ENCODE measurements at regions of chr2 and their contacts with region 1.

Region 1: GRCh38 chr2:217510771-217511291 is 492.0 kb downstream of the TNS1 start:
- DNase-seq: peak; percentile 91

Region 2: GRCh38 chr2:216698895-216699294 is 811.9 kb before region 1 on chr2:
- in situ Hi-C with region 1: loop called (anchors 25 kb)
- DNase-seq: peak; percentile 89

Region 3: DNA sequence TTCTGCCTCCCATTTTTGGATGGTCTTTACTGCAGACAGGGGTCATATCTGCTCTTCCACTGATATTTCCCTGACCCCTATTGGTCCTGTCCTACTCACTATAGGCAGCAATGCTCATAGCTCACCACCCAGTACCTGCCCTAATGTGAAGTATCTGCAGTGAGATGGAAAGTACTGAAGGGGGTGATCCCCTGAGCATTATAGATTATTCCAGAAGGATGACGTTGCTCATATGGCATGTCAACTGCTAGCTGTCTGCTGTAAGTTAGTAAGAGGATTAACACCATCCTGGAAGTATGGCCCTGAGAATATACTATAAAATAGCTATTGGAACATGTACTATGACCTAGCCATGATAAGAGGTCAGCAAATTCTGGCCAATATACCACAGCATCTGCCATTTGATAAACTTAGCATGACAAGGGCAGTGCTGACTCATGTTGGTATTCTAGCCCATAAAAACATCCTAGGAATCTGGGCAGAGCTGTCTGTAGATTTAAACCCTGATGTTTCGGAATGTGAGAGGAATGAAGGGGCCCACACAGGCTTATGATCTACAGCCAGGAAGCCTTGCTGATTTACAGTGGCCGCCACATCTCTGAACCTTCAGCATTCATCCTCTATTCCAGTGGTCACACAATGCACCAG is 40.5 kb after region 1 on chr2:
- in situ Hi-C with region 1: no loop called
- DNase-seq: no peak

Region 4: GRCh38 chr2:217713395-217714286 is 202.8 kb after region 1 on chr2:
- in situ Hi-C with region 1: no loop called
- DNase-seq: peak; percentile 86